PC-3 (cell line): ENCODE measurements at regions of chr4 and their contacts with region 1.

Region 1: GRCh38 chr4:143375313-143376073 is 38.8 kb downstream of the GAB1 start:
- DNase-seq: peak; percentile 55
- ATAC-seq: peak; percentile 92
- H3K4me3 ChIP-seq: no peak overlapping the region
- H3K27ac ChIP-seq: no peak overlapping the region
- H3K4me1 ChIP-seq: no peaks in the 10 kb centered on the region
- H3K27me3 ChIP-seq: no peaks in the 10 kb centered on the region
- CTCF ChIP-seq: peak; percentile 72

Region 2: GRCh38 chr4:143207557-143207956 is 167.9 kb before region 1 on chr4:
- CTCF ChIA-PET with region 1: no interaction called
- POLR2A ChIA-PET with region 1: no interaction called
- intact Hi-C with region 1: loop called (anchors 2 kb)
- DNase-seq: peak; percentile 44
- ATAC-seq: no peak
- H3K4me3 ChIP-seq: no peak overlapping the region
- H3K27ac ChIP-seq: no peak overlapping the region
- H3K4me1 ChIP-seq: no peaks in the 10 kb centered on the region
- H3K27me3 ChIP-seq: no peaks in the 10 kb centered on the region
- CTCF ChIP-seq: peak; percentile 56

Region 3: GRCh38 chr4:143399113-143399949 is 23.8 kb after region 1 on chr4:
- CTCF ChIA-PET with region 1: interaction called, 3 read pairs
- POLR2A ChIA-PET with region 1: interaction called, 16 read pairs
- intact Hi-C with region 1: no loop called
- DNase-seq: peak; percentile 75
- ATAC-seq: no peak
- H3K4me3 ChIP-seq: no peak overlapping the region
- H3K27ac ChIP-seq: no peak overlapping the region
- H3K4me1 ChIP-seq: peaks cover 16% of the 10 kb centered on the region
- H3K27me3 ChIP-seq: no peaks in the 10 kb centered on the region
- CTCF ChIP-seq: peak; percentile 92

Region 4: DNA sequence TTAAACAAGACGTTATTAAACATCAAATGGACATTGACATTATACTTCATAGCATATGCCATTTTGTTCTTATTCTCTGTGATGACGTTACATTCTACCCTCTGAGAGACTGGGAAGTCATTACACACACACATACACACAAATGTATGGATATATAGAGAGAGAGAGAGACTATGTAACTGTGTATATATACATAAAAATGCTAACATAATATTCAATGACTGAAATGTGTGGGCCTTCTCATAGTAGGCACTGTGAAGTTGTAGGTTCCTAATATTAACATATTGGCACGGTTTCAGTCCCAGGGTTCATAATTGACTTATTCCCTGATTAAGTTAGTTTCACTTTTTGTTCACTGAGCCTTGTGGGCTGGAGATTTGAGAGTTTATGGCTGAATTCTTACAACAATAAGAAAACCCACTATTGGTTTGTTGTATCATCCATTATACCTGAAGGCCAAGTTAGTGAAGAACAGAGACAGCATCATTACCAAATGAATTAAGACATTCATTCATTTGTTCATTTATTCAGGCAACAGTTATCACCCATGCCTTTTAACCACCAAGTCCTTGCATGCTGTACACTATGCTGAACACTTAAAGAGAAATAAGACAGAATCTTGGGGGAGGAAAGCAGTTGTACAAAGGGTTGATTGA is 29.7 kb after region 1 on chr4:
- CTCF ChIA-PET with region 1: no interaction called
- POLR2A ChIA-PET with region 1: interaction called, 13 read pairs
- intact Hi-C with region 1: no loop called
- DNase-seq: no peak
- ATAC-seq: no peak
- H3K4me3 ChIP-seq: no peak overlapping the region
- H3K27ac ChIP-seq: no peak overlapping the region
- H3K4me1 ChIP-seq: no peaks in the 10 kb centered on the region
- H3K27me3 ChIP-seq: no peaks in the 10 kb centered on the region
- CTCF ChIP-seq: no peak

Region 5: GRCh38 chr4:143482840-143483239 is 107.3 kb after region 1 on chr4:
- CTCF ChIA-PET with region 1: no interaction called
- POLR2A ChIA-PET with region 1: no interaction called
- intact Hi-C with region 1: loop called (anchors 1 kb)
- DNase-seq: peak; percentile 74
- ATAC-seq: peak; percentile 49
- H3K4me3 ChIP-seq: no peak overlapping the region
- H3K27ac ChIP-seq: no peak overlapping the region
- H3K4me1 ChIP-seq: no peaks in the 10 kb centered on the region
- H3K27me3 ChIP-seq: no peaks in the 10 kb centered on the region
- CTCF ChIP-seq: peak; percentile 86